HCT116 (cell line): ENCODE measurements at regions of chr13 and their contacts with region 1.

Region 1: GRCh38 chr13:110869805-110870706 is 44.8 kb downstream of the ANKRD10 start:
- DNase-seq: peak; percentile 99
- ATAC-seq: peak; percentile 81
- H3K4me3 ChIP-seq: peak overlapping the region; percentile 61 to 62
- H3K27ac ChIP-seq: peak overlapping the region; percentile 85
- H3K4me1 ChIP-seq: peaks cover 19 to 57% of the 10 kb centered on the region in 2 experiments
- H3K27me3 ChIP-seq: no peaks in the 10 kb centered on the region
- CTCF ChIP-seq: no peak
- POLR2A ChIP-seq: peak; percentile 36
- RAD21 ChIP-seq: no peak

Region 2: DNA sequence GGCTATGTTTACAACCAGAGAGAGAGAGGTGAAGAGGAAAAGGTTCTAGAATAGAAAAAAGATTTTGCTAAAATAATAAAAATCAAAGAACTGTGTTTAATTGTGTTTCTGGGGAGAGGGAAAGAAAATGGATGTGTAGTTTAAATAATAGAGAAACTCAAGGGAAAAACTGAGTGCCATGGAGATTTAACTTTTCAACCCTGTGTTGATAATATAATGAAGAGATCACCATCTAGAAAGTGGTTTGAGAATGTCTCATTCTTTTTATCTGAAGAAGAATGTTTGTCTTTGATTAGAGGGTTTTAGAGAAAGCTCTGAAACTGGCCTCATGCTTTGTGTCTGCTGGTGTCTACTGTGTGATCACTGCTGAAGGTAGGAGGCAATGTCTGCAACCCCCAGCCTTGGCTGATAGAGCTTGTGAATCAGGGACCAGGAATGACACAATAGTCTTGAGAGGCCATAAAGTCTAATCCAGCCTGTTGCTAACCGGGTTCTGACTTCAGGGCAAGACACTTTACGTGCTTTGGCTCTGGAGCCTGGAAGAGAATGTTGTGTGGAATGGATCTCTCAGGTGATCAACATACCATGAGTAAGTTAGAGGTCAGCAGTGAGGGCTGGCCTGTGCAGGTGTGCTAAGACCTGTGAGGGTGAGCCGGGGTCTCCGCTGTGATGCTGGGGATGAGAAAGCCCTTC is 557.6 kb before region 1 on chr13:
- CTCF ChIA-PET with region 1: no interaction called
- POLR2A ChIA-PET with region 1: no interaction called
- RAD21 ChIA-PET with region 1: no interaction called
- intact Hi-C with region 1: no loop called
- DNase-seq: no peak
- ATAC-seq: peak; percentile 40; the same call in 1 of the 2 replicates
- H3K4me3 ChIP-seq: no peak overlapping the region
- H3K27ac ChIP-seq: no peak overlapping the region
- H3K4me1 ChIP-seq: peaks cover 0 to 3% of the 10 kb centered on the region in 2 experiments; a peak in 1 of 4 replicates
- H3K27me3 ChIP-seq: 0 out of 2 replicates have a peak, but pooled peaks cover 3% of the 10 kb centered on the region
- CTCF ChIP-seq: no peak
- POLR2A ChIP-seq: no peak
- RAD21 ChIP-seq: no peak

Region 3: GRCh38 chr13:110705826-110706569 is 164.1 kb before region 1 on chr13 and contains the start of gene CARS2:
- CTCF ChIA-PET with region 1: no interaction called
- POLR2A ChIA-PET with region 1: no interaction called
- RAD21 ChIA-PET with region 1: no interaction called
- intact Hi-C with region 1: loop called (anchors 2 kb)
- DNase-seq: peak; percentile 94
- ATAC-seq: peak; percentile 92
- H3K4me3 ChIP-seq: peak within 1 kb of the TSS; percentile 83 to 84
- H3K27ac ChIP-seq: peak within 1 kb of the TSS; percentile 78
- H3K4me1 ChIP-seq: peaks cover 17 to 37% of the 10 kb centered on the region in 2 experiments
- H3K27me3 ChIP-seq: no peaks in the 10 kb centered on the region
- CTCF ChIP-seq: no peak
- POLR2A ChIP-seq: no peak
- RAD21 ChIP-seq: no peak
- total RNA-seq, gene CARS2: 52.9 TPM

Region 4: DNA sequence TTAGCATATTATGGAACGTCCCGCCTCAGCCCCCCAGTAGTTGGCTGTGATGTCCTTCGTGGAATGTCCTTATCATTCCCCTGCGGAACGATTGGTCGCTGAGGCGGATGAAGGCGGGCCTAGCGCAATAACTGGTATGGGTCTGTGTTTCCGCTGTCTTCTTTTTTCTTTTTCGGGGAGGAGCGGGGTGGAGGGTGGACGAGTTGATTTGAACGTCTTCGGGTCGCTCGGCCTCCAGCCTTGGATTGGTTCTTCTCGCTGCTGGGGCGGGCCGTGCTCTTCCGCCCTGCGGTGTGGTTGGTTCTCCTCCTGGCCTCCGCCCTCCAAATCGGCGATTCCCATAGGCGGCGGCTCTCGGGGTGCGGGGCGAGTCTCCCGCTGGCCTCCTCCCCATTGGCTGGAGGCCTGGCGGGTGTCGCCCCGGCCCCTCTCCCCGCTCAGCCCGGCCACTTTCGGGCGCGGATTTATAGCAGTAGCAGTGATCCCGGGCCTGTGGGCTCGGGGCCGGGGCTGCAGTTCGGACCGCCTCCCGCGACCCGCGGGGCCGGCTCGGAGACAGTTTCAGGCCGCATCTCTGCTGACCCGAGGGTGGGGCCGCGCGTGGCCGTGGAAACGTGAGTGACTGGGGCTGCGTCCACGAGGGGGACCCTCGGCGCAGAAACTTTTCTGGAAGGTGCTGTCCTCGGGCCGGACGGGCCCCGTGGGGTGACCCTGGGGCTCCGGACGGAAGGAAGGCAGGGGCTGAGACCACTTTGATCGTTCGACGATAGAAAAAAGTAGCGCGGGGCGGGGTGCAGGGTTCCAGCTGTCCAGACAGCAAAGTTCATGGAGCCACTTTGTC is 154.4 kb before region 1 on chr13:
- CTCF ChIA-PET with region 1: no interaction called
- POLR2A ChIA-PET with region 1: interaction called, 9 read pairs
- RAD21 ChIA-PET with region 1: no interaction called
- intact Hi-C with region 1: loop called (anchors 2 kb)
- DNase-seq: peak; percentile 99
- ATAC-seq: peak; percentile 73
- H3K4me3 ChIP-seq: peak overlapping the region; percentile 88 to 93
- H3K27ac ChIP-seq: peak overlapping the region; percentile 73
- H3K4me1 ChIP-seq: peaks cover 15 to 32% of the 10 kb centered on the region in 2 experiments; a peak in 3 of 4 replicates
- H3K27me3 ChIP-seq: no peaks in the 10 kb centered on the region
- CTCF ChIP-seq: 0 out of 6 replicates have a peak, but pooled peaks of 1 of the 3 experiments have one; percentile 18
- POLR2A ChIP-seq: no peak
- RAD21 ChIP-seq: no peak

Region 5: DNA sequence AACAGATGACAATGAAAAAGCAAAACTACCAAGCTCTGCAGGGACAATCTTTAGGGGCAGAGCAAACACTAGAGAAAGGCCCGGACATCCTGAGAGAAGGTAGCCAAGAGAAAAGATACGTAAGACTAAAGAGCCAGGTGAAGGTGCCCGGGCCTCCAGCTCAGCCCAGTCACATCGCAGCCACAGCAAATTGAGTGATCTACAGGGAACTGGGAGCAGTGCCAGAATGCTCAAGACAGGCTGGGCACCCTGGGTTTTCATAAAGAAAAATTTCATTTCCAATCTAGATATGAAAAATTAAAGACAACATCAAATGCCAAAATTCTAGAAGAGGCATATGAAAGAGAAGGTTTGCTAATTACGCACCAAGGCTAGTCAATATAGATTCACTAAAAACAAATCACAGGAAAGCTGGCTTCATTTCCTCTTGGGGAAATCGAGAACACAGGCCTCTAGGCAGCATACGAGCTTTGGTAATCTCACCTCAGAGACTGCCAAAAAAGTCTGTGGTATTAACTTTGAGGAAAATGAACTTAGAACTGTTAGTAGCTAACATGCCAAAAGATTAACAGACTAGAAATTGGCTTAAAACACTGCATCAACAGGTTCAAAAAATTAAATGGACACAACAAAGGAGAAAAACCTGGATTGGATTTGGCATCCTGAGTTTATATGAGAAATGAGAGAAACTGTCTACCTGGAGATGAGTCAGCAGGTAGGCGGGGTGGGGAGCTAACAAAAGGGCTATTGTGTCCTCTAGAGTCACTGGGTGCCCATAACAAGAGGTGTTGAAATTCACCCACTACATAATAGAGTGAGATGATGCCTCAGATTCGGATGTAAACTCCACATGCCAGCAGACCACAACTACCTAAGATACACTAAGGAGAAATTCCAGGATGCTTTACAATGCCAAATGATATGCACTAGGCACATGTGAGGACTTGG is 38.2 kb after region 1 on chr13:
- CTCF ChIA-PET with region 1: no interaction called
- POLR2A ChIA-PET with region 1: no interaction called
- RAD21 ChIA-PET with region 1: no interaction called
- intact Hi-C with region 1: loop called (anchors 1 kb)
- DNase-seq: peak; percentile 95
- ATAC-seq: peak; percentile 90
- H3K4me3 ChIP-seq: peak overlapping the region; percentile 12 to 31; a peak in 3 of 4 replicates
- H3K27ac ChIP-seq: peak overlapping the region; percentile 83
- H3K4me1 ChIP-seq: peaks cover 57 to 70% of the 10 kb centered on the region in 2 experiments
- H3K27me3 ChIP-seq: no peaks in the 10 kb centered on the region
- CTCF ChIP-seq: no peak
- POLR2A ChIP-seq: no peak
- RAD21 ChIP-seq: no peak